ENCODE measurements at regions of chr1 and their contacts with region 1.

Region 1: GRCh38 chr1:116769561-116769977 is 15.3 kb downstream of the CD2 start:
- DNase-seq: no peak
- ATAC-seq: peak; percentile 68
- H3K4me3 Mint-ChIP-seq: peak overlapping the region; percentile 73
- H3K27ac Mint-ChIP-seq: peak overlapping the region; percentile 96
- H3K4me1 Mint-ChIP-seq: peaks cover 76% of the 10 kb centered on the region
- H3K27me3 Mint-ChIP-seq: no peaks in the 10 kb centered on the region

Region 2: GRCh38 chr1:116711263-116711840 is 58.2 kb before region 1 on chr1:
- POLR2A ChIA-PET with region 1: no interaction called
- DNase-seq: no peak
- ATAC-seq: no peak
- H3K4me3 Mint-ChIP-seq: no peak overlapping the region
- H3K27ac Mint-ChIP-seq: no peak overlapping the region
- H3K4me1 Mint-ChIP-seq: peaks cover 6% of the 10 kb centered on the region
- H3K27me3 Mint-ChIP-seq: peaks cover 4% of the 10 kb centered on the region

Region 3: GRCh38 chr1:116737020-116737854 is 32.3 kb before region 1 on chr1:
- POLR2A ChIA-PET with region 1: interaction called, 85 read pairs
- DNase-seq: peak; percentile 81
- ATAC-seq: peak; percentile 57
- H3K4me3 Mint-ChIP-seq: peak overlapping the region; percentile 76
- H3K27ac Mint-ChIP-seq: peak overlapping the region; percentile 97
- H3K4me1 Mint-ChIP-seq: peaks cover 52% of the 10 kb centered on the region
- H3K27me3 Mint-ChIP-seq: no peaks in the 10 kb centered on the region

Region 4: DNA sequence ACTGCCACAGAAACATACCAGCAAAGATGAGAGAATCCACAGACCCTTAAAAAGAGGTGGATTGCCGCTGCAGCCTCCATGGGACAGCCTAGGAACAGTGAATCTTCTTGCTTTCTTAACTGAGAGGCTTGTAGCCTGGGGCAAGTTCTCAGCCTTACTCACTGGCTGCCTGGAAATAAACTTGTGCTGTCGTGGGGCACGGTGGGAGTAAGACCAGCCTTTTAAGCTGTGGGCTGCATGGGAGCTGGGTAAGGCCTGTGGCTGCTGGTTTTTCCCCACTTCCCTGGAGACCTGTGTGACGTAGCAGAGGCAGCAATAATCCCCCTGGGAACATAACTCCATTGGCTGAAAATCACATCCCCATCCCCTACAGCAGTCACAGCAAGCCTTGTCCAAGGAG is 15.4 kb after region 1 on chr1:
- POLR2A ChIA-PET with region 1: interaction called, 11 read pairs
- DNase-seq: no peak
- ATAC-seq: no peak
- H3K4me3 Mint-ChIP-seq: no peak overlapping the region
- H3K27ac Mint-ChIP-seq: no peak overlapping the region
- H3K4me1 Mint-ChIP-seq: peaks cover 25% of the 10 kb centered on the region
- H3K27me3 Mint-ChIP-seq: no peaks in the 10 kb centered on the region

Region 5: DNA sequence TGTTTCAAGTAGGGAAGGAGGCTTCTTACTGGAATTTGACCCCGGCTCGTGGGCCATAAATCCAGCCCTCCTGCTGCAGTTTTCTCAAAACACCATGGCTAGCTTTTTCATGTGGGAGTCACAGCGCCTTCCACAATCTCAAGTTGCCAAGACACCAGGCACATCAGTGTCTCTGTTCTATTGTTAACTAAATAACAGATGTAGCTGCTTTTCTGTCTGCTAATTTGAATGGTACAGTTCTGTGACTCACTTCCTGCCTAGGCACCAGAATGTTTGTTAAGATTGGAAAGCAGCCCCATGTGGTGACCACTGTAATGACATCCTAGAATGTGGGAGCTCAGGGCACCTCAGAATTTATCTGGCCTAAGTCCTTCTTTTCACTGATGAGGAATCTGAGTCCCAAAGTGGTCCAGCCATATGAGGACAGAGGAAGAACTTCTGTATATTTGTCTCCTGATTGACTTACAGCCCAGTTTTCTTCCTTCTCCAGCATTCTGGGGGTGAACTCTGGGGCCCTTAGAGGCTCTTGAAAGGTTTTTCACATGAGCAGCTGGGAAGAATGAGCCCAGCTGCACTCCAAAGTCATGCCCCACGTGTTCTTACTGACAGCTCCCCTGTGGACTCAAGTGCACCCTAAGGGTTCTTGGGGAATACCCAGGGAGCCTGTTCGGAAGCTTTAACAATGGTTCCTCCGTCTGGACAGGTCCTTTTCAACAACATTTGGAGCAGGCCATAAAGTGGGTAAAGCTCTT is 324.5 kb after region 1 on chr1:
- POLR2A ChIA-PET with region 1: no interaction called
- DNase-seq: no peak
- ATAC-seq: peak; percentile 87
- H3K4me3 Mint-ChIP-seq: no peak overlapping the region
- H3K27ac Mint-ChIP-seq: peak overlapping the region; percentile 52
- H3K4me1 Mint-ChIP-seq: peaks cover 6% of the 10 kb centered on the region
- H3K27me3 Mint-ChIP-seq: no peaks in the 10 kb centered on the region